IMR-90 (cell line): ENCODE measurements at regions of chr15 and their contacts with region 1.

Region 1: GRCh38 chr15:67212684-67213367 is 41.6 kb downstream of the AAGAB start:
- DNase-seq: no peak
- ATAC-seq: peak; percentile 75
- H3K4me3 ChIP-seq: no peak overlapping the region
- H3K27ac ChIP-seq: no peak overlapping the region
- H3K4me1 ChIP-seq: peaks cover 1% of the 10 kb centered on the region; the same call in 1 of the 2 replicates
- H3K27me3 ChIP-seq: no peaks in the 10 kb centered on the region
- CTCF ChIP-seq: no peak
- POLR2A ChIP-seq: no peak
- RAD21 ChIP-seq: no peak

Region 2: GRCh38 chr15:66981771-66982170 is 231.1 kb before region 1 on chr15:
- CTCF ChIA-PET with region 1: no interaction called
- POLR2A ChIA-PET with region 1: no interaction called
- dilution Hi-C with region 1: no loop called
- in situ Hi-C with region 1: no loop called
- intact Hi-C with region 1: no loop called
- DNase-seq: no peak
- ATAC-seq: no peak
- H3K4me3 ChIP-seq: no peak overlapping the region
- H3K27ac ChIP-seq: no peak overlapping the region
- H3K4me1 ChIP-seq: no peaks in the 10 kb centered on the region
- H3K27me3 ChIP-seq: peaks cover 12% of the 10 kb centered on the region
- CTCF ChIP-seq: no peak
- POLR2A ChIP-seq: no peak
- RAD21 ChIP-seq: no peak

Region 3: DNA sequence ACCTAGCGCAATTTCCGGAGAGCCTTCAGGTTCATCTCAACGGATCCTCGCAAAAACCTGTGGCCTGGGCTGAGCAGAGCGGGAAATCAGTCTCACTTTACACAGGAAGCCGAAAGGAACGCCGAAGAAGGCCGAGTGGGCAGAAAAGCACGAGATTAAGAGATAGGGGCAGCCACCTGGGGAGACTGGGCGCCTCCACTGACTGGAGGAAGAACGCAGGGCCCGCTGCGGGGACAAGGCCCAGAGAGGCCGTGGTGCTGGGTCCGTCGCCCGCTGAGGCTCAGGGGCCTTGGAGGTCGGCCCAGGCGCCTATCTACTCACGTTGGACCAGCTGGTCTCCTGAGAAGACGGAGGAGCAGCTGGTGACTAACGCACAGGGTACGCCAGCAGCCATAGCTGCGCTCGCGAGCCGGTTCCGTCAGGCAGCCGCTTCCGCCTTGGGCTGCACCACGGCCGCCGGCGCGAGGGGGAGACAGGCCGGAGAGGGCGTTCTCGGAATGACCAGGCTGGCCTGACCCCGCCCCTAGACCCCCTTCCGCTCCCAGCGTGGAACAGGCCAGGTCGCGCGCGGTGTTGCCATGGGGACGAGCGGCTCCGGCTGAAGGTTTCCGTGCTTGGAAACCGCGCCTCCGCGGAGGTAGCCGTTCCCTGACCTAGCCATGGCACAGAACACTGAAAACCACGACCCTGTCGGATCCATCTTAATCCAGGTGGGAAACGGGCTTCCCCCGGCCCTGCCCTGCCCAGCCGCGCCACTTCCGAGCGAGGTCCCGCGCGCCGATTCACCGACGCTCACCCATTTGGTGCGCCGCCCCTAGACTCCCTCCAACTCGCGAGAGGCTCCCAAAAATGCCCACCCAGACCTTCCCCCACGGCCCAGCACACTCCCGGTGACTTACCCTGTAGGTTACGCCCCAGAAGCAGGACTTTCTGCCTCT is 41.7 kb after region 1 on chr15 and contains the starts of genes AAGAB and IQCH:
- CTCF ChIA-PET with region 1: no interaction called
- POLR2A ChIA-PET with region 1: no interaction called
- dilution Hi-C with region 1: no loop called
- in situ Hi-C with region 1: no loop called
- intact Hi-C with region 1: loop called (anchors 5 kb)
- DNase-seq: peak; percentile 98
- ATAC-seq: peak; percentile 100
- H3K4me3 ChIP-seq: peak within 1 kb of the TSS; percentile 57
- H3K27ac ChIP-seq: peak within 1 kb of the TSS; percentile 83
- H3K4me1 ChIP-seq: peaks cover 2% of the 10 kb centered on the region; the same call in 1 of the 2 replicates
- H3K27me3 ChIP-seq: no peaks in the 10 kb centered on the region
- CTCF ChIP-seq: no peak
- POLR2A ChIP-seq: peak; percentile 93
- RAD21 ChIP-seq: no peak
- total RNA-seq, gene AAGAB: 56.7 and 69.7 TPM in 2 replicates
- total RNA-seq, gene IQCH: 2.5 and 2.8 TPM in 2 replicates